ENCODE measurements at regions of chr5 and their contacts with region 1.

Region 1: GRCh38 chr5:150778517-150779396 is at the start of gene SMIM3:
- DNase-seq: peak; percentile 88
- ATAC-seq: peak; percentile 86
- H3K4me3 Mint-ChIP-seq: peak within 1 kb of the TSS; percentile 97
- H3K27ac Mint-ChIP-seq: peak within 1 kb of the TSS; percentile 95
- H3K4me1 Mint-ChIP-seq: peaks cover 49% of the 10 kb centered on the region
- H3K27me3 Mint-ChIP-seq: peaks cover 18% of the 10 kb centered on the region
- CTCF ChIP-seq: no peak
- total RNA-seq, gene SMIM3: 11.1 to 14.1 TPM (median 12.2 TPM) in 3 replicates

Region 2: GRCh38 chr5:150734579-150735384 is 44.0 kb before region 1 on chr5:
- CTCF ChIA-PET with region 1: interaction called, 17 read pairs
- POLR2A ChIA-PET with region 1: no interaction called
- DNase-seq: peak; percentile 21
- ATAC-seq: peak; percentile 60
- H3K4me3 Mint-ChIP-seq: no peak overlapping the region
- H3K27ac Mint-ChIP-seq: no peak overlapping the region
- H3K4me1 Mint-ChIP-seq: peaks cover 29% of the 10 kb centered on the region
- H3K27me3 Mint-ChIP-seq: no peaks in the 10 kb centered on the region
- CTCF ChIP-seq: no peak

Region 3: GRCh38 chr5:150758531-150759333 is 20.0 kb before region 1 on chr5 and contains the start of gene DCTN4:
- CTCF ChIA-PET with region 1: interaction called, 29 read pairs
- POLR2A ChIA-PET with region 1: interaction called, 8 read pairs
- DNase-seq: peak; percentile 92
- ATAC-seq: peak; percentile 96
- H3K4me3 Mint-ChIP-seq: no peak within 1 kb of the TSS
- H3K27ac Mint-ChIP-seq: no peak within 1 kb of the TSS
- H3K4me1 Mint-ChIP-seq: peaks cover 9% of the 10 kb centered on the region
- H3K27me3 Mint-ChIP-seq: peaks cover 37% of the 10 kb centered on the region
- CTCF ChIP-seq: no peak
- total RNA-seq, gene DCTN4: 41.1 to 43.9 TPM (median 43.2 TPM) in 3 replicates

Region 4: DNA sequence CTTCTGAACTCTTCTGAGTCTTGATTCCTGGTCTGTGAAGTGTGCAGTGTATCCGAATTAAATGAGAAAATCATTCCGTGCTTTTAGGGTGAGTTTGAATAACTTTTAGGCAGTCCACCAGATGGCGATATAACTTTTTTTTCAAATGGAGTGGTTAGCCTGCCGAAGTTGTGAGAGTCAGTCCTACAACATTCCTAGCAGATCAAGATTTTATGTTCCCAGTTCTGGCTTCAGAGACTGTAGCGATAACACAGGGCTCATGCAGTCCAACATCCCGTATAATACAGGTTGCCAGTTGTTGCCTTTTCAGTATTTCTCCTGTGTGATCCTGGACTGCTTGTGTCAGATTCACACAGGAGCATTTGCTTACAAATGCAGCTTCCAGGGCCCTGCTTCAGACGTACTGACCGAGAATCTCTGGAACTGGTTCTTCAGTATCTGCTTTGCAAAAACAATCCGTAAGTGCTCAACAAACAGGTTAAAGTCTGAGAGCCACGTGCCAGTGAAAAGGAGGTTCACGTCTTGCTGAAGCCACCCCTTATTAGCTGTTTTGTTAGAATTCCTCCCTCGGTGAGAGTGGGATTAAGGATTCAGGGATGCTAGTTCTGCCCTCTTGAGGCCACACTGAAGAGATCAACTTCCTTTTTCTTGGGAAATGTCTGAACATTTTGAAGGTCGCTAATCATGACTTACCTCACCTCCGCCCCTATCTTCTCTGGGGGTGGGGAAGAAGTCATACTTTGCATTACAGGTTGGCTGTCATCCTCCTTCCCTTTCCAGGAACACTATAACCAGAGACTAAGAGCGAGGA is 22.6 kb after region 1 on chr5:
- CTCF ChIA-PET with region 1: interaction called, 18 read pairs
- POLR2A ChIA-PET with region 1: no interaction called
- DNase-seq: no peak
- ATAC-seq: peak; percentile 81
- H3K4me3 Mint-ChIP-seq: peak overlapping the region; percentile 67
- H3K27ac Mint-ChIP-seq: 0 out of 2 replicates have a peak overlapping the region, but pooled peaks have one; percentile 29
- H3K4me1 Mint-ChIP-seq: no peaks in the 10 kb centered on the region
- H3K27me3 Mint-ChIP-seq: peaks cover 12% of the 10 kb centered on the region
- CTCF ChIP-seq: no peak

Region 5: DNA sequence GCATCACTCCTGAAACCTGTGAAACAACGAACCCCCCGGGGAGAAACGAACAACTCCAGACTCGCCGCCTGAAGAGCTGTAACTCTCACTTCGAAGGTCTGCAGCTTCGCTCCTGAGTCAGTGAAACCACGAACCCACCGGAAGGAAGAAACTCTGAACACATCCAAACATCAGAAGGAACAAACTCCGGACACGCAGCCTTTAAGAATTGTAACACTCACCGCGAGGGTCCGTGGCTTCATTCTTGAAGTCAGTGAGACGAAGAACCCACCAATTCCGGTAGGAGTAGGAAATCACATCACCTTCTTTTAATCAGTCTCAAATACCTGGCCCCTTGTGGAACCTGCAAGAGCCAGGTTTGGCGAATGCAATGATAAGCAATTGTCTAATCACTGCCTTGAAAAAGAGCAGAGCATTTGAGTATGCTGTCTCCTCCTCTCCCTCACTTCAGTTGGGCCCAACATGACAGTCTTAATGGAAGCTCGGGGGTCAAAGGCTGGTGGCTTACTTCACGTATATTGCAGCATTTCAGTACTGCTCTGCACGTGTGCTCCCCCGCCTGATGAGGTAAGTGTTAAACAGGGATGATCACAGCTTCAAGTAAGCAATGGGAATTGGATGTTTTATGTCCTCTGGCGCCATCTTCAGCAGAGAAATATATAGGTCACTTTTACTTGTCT is 68.0 kb after region 1 on chr5:
- CTCF ChIA-PET with region 1: interaction called, 15 read pairs
- POLR2A ChIA-PET with region 1: interaction called, 4 read pairs
- DNase-seq: peak; percentile 34
- ATAC-seq: peak; percentile 98
- H3K4me3 Mint-ChIP-seq: no peak overlapping the region
- H3K27ac Mint-ChIP-seq: no peak overlapping the region
- H3K4me1 Mint-ChIP-seq: peaks cover 8% of the 10 kb centered on the region; the same call in 1 of the 2 replicates
- H3K27me3 Mint-ChIP-seq: peaks cover 18% of the 10 kb centered on the region
- CTCF ChIP-seq: peak; percentile 57

Region 6: GRCh38 chr5:150879358-150879757 is 100.6 kb after region 1 on chr5:
- CTCF ChIA-PET with region 1: no interaction called
- POLR2A ChIA-PET with region 1: no interaction called
- DNase-seq: no peak
- ATAC-seq: no peak
- H3K4me3 Mint-ChIP-seq: no peak overlapping the region
- H3K27ac Mint-ChIP-seq: no peak overlapping the region
- H3K4me1 Mint-ChIP-seq: no peaks in the 10 kb centered on the region
- H3K27me3 Mint-ChIP-seq: peaks cover 10% of the 10 kb centered on the region
- CTCF ChIP-seq: no peak

Region 7: GRCh38 chr5:150931368-150931965 is 152.7 kb after region 1 on chr5:
- CTCF ChIA-PET with region 1: no interaction called
- POLR2A ChIA-PET with region 1: no interaction called
- DNase-seq: no peak
- ATAC-seq: no peak
- H3K4me3 Mint-ChIP-seq: no peak overlapping the region
- H3K27ac Mint-ChIP-seq: no peak overlapping the region
- H3K4me1 Mint-ChIP-seq: no peaks in the 10 kb centered on the region
- H3K27me3 Mint-ChIP-seq: peaks cover 17% of the 10 kb centered on the region
- CTCF ChIP-seq: no peak

Measured in WTC11 (cell line).